Dendritic cell treated with granulocyte-macrophage colony-stimulating factor and Interleukin-4, amounts not matched to agents 40 ng/mL and 50 ng/mL, for 4 days (primary cell): ENCODE measurements at regions of chr15 and their contacts with region 1.

Region 1: DNA sequence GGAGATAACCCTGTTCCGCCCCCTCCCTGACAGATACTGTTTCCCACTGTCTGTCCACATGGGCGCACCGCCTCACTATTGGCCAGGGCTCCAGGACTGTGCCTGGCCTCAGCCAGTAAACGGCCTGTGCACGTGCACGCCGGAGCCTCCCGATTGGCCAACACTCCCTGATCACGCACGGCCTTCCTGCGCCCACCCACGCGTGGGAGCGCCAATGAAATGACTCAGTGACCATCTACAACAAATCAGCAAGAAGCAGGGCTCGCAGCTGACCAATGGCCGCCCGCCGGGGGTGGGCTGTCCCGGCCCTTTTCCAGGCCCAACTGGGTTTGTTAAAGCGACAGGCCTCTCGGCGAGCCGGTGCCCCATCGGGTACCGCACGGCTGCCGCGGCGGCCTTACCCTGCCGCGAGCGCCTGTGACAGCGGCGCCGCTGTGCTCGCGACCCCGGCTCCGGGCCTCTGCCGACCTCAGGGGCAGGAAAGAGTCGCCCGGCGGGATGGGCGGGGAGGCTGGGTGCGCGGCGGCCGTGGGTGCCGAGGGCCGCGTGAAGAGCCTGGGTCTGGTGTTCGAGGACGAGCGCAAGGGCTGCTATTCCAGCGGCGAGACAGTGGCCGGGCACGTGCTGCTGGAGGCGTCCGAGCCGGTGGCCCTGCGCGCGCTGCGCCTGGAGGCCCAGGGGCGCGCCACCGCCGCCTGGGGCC is at the start of gene ARRDC4:
- H3K4me3 Mint-ChIP-seq: peak within 1 kb of the TSS; percentile 95
- H3K27ac Mint-ChIP-seq: peak within 1 kb of the TSS; percentile 96
- H3K4me1 Mint-ChIP-seq: peaks cover 43% of the 10 kb centered on the region
- H3K27me3 Mint-ChIP-seq: no peaks in the 10 kb centered on the region

Region 2: GRCh38 chr15:97914711-97915110 is 45.8 kb before region 1 on chr15:
- intact Hi-C with region 1: loop called (anchors 5 kb)
- H3K4me3 Mint-ChIP-seq: no peak overlapping the region
- H3K27ac Mint-ChIP-seq: no peak overlapping the region
- H3K4me1 Mint-ChIP-seq: peaks cover 12% of the 10 kb centered on the region
- H3K27me3 Mint-ChIP-seq: peaks cover 6% of the 10 kb centered on the region

Region 3: GRCh38 chr15:97995881-97996603 is 35.5 kb after region 1 on chr15:
- intact Hi-C with region 1: loop called (anchors 5 kb)
- H3K4me3 Mint-ChIP-seq: peak overlapping the region; percentile 33
- H3K27ac Mint-ChIP-seq: peak overlapping the region; percentile 38
- H3K4me1 Mint-ChIP-seq: peaks cover 48% of the 10 kb centered on the region
- H3K27me3 Mint-ChIP-seq: peaks cover 1% of the 10 kb centered on the region

Region 4: GRCh38 chr15:98063315-98063714 is 102.8 kb after region 1 on chr15:
- intact Hi-C with region 1: loop called (anchors 5 kb)
- H3K4me3 Mint-ChIP-seq: peak overlapping the region; percentile 52
- H3K27ac Mint-ChIP-seq: peak overlapping the region; percentile 70
- H3K4me1 Mint-ChIP-seq: peaks cover 72% of the 10 kb centered on the region
- H3K27me3 Mint-ChIP-seq: peaks cover 4% of the 10 kb centered on the region

Region 5: GRCh38 chr15:98076021-98076816 is 115.7 kb after region 1 on chr15:
- intact Hi-C with region 1: loop called (anchors 2 kb)
- H3K4me3 Mint-ChIP-seq: peak overlapping the region; percentile 70
- H3K27ac Mint-ChIP-seq: peak overlapping the region; percentile 99
- H3K4me1 Mint-ChIP-seq: peaks cover 67% of the 10 kb centered on the region
- H3K27me3 Mint-ChIP-seq: no peaks in the 10 kb centered on the region

Region 6: DNA sequence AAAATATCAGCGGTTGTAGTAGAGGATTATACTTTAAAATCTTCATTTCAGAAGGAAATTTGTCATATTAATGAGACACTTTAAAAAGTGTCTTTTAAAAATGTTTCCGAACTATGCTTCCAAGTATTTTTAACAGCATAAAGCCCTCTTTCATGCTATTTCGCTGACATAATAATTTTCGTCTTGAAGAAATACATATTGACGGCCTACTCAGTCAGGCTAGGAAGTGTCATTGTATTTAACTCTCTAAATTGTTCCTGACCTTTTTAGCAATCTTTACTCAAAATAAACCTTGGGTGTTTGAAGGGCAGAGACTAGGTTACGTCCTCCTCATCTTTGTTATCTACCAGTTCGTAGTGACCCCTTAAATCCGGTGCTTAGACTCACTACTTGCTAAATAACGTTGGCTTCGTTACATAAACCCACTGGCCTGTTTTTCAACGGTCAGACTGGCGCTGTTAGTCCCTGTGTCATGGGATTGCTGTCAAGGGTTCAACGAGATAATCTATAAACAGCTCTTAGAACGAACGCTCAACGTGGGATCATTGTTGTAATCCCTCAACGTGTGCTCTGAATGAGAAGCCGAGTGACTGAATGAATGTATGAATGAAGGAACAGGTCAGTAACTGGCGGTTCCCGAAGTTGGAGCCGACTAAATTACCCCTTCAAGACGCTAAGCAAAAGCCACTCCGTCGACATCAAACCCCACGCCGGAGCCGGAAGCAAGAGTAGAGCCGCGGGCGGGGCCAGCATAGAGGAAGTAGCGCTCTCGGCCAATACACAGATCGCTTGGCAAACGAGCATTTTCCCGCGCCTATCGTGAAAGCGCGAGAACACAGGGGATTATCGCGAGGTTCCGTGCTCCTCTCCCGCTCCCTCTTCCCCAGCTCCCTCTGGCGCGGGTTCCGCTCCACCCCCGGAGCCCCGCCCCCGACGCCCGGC is 1290.2 kb after region 1 on chr15:
- intact Hi-C with region 1: loop called (anchors 5 kb)
- H3K4me3 Mint-ChIP-seq: peak overlapping the region; percentile 85
- H3K27ac Mint-ChIP-seq: peak overlapping the region; percentile 89
- H3K4me1 Mint-ChIP-seq: peaks cover 19% of the 10 kb centered on the region
- H3K27me3 Mint-ChIP-seq: no peaks in the 10 kb centered on the region

Region 7: GRCh38 chr15:99909592-99910295 is 1949.2 kb after region 1 on chr15:
- intact Hi-C with region 1: loop called (anchors 10 kb)
- H3K4me3 Mint-ChIP-seq: no peak overlapping the region
- H3K27ac Mint-ChIP-seq: peak overlapping the region; percentile 46
- H3K4me1 Mint-ChIP-seq: peaks cover 18% of the 10 kb centered on the region
- H3K27me3 Mint-ChIP-seq: peaks cover 2% of the 10 kb centered on the region